H1 (cell line): ENCODE measurements at regions of chr11 and their contacts with region 1.

Region 1: GRCh38 chr11:36469063-36469462 is 41.0 kb downstream of the TRAF6 start:
- DNase-seq: peak; percentile 29 to 94
- H3K4me3 ChIP-seq: no peak overlapping the region
- H3K27ac ChIP-seq: no peak overlapping the region
- H3K4me1 ChIP-seq: peaks cover 0 to 4% (median under 1%) of the 10 kb centered on the region in 4 experiments; a peak in 1 of 7 replicates
- H3K27me3 ChIP-seq: no peaks in the 10 kb centered on the region
- CTCF ChIP-seq: peak; percentile 88 to 95 (median 89)
- EP300 ChIP-seq: no peak
- POLR2A ChIP-seq: no peak
- RAD21 ChIP-seq: peak; percentile 63 to 79

Region 2: GRCh38 chr11:36278531-36279282 is 190.4 kb before region 1 on chr11:
- CTCF ChIA-PET with region 1: interaction called, 12 read pairs
- POLR2A ChIA-PET with region 1: no interaction called
- DNase-seq: no peak
- H3K4me3 ChIP-seq: no peak overlapping the region
- H3K27ac ChIP-seq: no peak overlapping the region
- H3K4me1 ChIP-seq: no peaks in the 10 kb centered on the region
- H3K27me3 ChIP-seq: no peaks in the 10 kb centered on the region
- CTCF ChIP-seq: peak; percentile 33 to 38 (median 36)
- EP300 ChIP-seq: no peak
- POLR2A ChIP-seq: no peak
- RAD21 ChIP-seq: peak in 1 of 2 experiments; percentile 40; a peak in 2 of 4 replicates

Region 3: GRCh38 chr11:36300651-36301050 is 168.4 kb before region 1 on chr11:
- CTCF ChIA-PET with region 1: interaction called, 10 read pairs
- POLR2A ChIA-PET with region 1: no interaction called
- DNase-seq: no peak
- H3K4me3 ChIP-seq: no peak overlapping the region
- H3K27ac ChIP-seq: no peak overlapping the region
- H3K4me1 ChIP-seq: no peaks in the 10 kb centered on the region
- H3K27me3 ChIP-seq: no peaks in the 10 kb centered on the region
- CTCF ChIP-seq: no peak
- EP300 ChIP-seq: no peak
- POLR2A ChIP-seq: no peak
- RAD21 ChIP-seq: no peak

Region 4: GRCh38 chr11:36376888-36377758 is 91.9 kb before region 1 on chr11:
- CTCF ChIA-PET with region 1: interaction called, 11 read pairs
- POLR2A ChIA-PET with region 1: no interaction called
- DNase-seq: peak; percentile 56 to 86
- H3K4me3 ChIP-seq: peak overlapping the region; percentile 81 to 98 (median 84)
- H3K27ac ChIP-seq: no peak overlapping the region
- H3K4me1 ChIP-seq: peaks cover 0 to 3% (median 1%) of the 10 kb centered on the region in 4 experiments; a peak in 1 of 7 replicates
- H3K27me3 ChIP-seq: peaks cover 4 to 23% (median 17%) of the 10 kb centered on the region in 4 experiments
- CTCF ChIP-seq: peak; percentile 56 to 58 (median 57)
- EP300 ChIP-seq: no peak
- POLR2A ChIP-seq: peak in 1 of 2 experiments; percentile 18; a peak in 1 of 3 replicates
- RAD21 ChIP-seq: peak; percentile 26 to 47

Region 5: GRCh38 chr11:36411202-36411640 is 57.8 kb before region 1 on chr11:
- CTCF ChIA-PET with region 1: interaction called, 10 read pairs
- POLR2A ChIA-PET with region 1: no interaction called
- DNase-seq: no peak
- H3K4me3 ChIP-seq: no peak overlapping the region
- H3K27ac ChIP-seq: no peak overlapping the region
- H3K4me1 ChIP-seq: no peaks in the 10 kb centered on the region
- H3K27me3 ChIP-seq: no peaks in the 10 kb centered on the region
- CTCF ChIP-seq: no peak
- EP300 ChIP-seq: no peak
- POLR2A ChIP-seq: no peak
- RAD21 ChIP-seq: no peak

Region 6: DNA sequence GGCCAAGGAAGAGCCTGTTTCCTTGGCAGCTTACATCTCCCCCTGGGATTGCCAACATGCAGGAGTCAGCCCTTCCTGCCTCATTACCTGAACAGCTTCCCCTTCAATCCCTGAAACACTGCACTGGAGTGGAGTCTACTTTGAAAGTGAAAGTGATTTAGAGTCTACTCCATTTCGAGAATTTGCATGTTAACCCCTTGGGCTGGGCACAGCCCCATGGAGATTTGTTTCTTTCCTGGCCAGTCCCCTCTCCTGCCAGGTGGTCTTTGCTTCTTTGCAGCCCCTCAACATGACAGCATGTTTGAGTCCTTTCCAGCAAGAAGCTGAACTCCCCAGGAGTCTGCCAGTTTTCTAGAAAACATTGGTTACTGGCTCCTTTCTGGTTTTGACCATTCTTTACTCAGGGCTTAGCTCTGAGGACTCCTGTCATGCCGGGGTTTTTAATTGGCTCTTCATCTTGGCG is 18.9 kb before region 1 on chr11:
- CTCF ChIA-PET with region 1: interaction called, 59 read pairs
- POLR2A ChIA-PET with region 1: no interaction called
- DNase-seq: no peak
- H3K4me3 ChIP-seq: no peak overlapping the region
- H3K27ac ChIP-seq: no peak overlapping the region
- H3K4me1 ChIP-seq: peaks cover 0 to 13% (median 8%) of the 10 kb centered on the region in 4 experiments; a peak in 6 of 7 replicates
- H3K27me3 ChIP-seq: no peaks in the 10 kb centered on the region
- CTCF ChIP-seq: no peak
- EP300 ChIP-seq: no peak
- POLR2A ChIP-seq: no peak
- RAD21 ChIP-seq: no peak

Region 7: GRCh38 chr11:36455658-36456111 is 13.4 kb before region 1 on chr11:
- CTCF ChIA-PET with region 1: interaction called, 59 read pairs
- POLR2A ChIA-PET with region 1: interaction called, 5 read pairs
- DNase-seq: no peak
- H3K4me3 ChIP-seq: no peak overlapping the region
- H3K27ac ChIP-seq: no peak overlapping the region
- H3K4me1 ChIP-seq: peaks cover 0 to 30% (median 13%) of the 10 kb centered on the region in 4 experiments; a peak in 6 of 7 replicates
- H3K27me3 ChIP-seq: no peaks in the 10 kb centered on the region
- CTCF ChIP-seq: no peak
- EP300 ChIP-seq: no peak
- POLR2A ChIP-seq: no peak
- RAD21 ChIP-seq: no peak